RWPE1 (cell line): ENCODE measurements at regions of chr6 and their contacts with region 1.

Region 1: DNA sequence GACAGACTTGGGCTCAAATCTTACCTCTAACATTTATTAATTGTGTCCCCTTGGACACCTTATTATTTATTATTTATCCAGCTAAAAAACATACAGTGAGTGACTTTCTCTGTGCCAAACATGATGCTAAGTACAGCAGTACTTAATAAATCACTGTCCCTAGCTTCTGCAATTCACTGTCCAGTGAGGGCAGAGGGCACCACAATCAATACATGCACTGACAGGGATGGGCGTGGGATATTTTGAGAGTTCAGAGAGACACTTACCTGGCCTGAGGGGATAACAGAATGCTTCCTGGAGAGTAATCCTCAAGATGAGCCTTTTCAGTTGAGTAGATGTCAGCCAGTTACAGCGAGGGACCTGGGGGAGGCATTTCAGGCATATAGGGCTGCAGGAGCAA is 9.3 kb upstream of the TAAR2 start:
- DNase-seq: no peak
- H3K27ac ChIP-seq: no peak overlapping the region
- CTCF ChIP-seq: no peak

Region 2: GRCh38 chr6:132465530-132466485 is 167.6 kb before region 1 on chr6:
- CTCF ChIA-PET with region 1: no interaction called
- POLR2A ChIA-PET with region 1: no interaction called
- DNase-seq: no peak
- H3K27ac ChIP-seq: no peak overlapping the region
- CTCF ChIP-seq: no peak

Region 3: DNA sequence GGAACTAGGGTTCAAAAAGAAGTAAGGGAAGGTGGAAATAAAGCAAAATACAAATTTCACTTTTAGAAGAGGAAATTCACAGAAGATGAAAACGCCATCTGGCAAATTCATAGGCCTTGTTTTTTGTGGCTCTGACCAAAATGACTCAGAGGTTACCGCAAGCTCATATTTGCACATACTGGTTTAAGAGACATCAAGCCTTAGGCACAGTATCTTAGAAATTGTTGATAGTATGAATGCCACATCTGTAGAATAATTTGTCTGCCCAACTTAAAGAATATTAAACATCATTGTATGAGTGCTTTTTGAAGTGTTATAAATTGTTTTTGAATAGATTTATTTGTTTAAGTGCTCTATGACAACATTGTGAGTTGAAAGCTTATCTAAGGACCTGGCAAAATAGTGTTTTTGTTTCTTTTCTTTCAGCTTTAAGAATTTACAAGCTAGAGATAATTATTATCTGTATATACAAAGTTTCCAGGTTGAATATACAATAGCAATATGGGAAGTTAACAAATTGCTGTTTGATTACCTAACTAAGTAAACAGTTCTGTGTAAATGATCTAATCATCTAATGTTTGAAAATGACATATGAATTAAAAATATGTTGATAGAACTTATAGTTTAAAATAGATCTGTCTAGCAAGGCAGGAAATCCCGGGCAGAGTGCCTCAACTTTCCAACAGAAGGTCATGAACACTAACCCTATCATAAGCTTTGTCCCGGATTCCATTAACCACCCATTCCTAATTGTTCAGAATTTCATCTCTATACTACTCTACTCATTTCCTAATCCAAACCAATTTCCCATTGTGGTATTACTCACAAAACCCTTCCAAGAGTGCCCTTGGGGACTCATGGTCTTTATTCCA is 15.2 kb after region 1 on chr6:
- CTCF ChIA-PET with region 1: interaction called, 11 read pairs
- POLR2A ChIA-PET with region 1: no interaction called
- DNase-seq: peak; percentile 38
- H3K27ac ChIP-seq: no peak overlapping the region
- CTCF ChIP-seq: no peak